ENCODE measurements at regions of chr11 and their contacts with region 1.

Region 1: DNA sequence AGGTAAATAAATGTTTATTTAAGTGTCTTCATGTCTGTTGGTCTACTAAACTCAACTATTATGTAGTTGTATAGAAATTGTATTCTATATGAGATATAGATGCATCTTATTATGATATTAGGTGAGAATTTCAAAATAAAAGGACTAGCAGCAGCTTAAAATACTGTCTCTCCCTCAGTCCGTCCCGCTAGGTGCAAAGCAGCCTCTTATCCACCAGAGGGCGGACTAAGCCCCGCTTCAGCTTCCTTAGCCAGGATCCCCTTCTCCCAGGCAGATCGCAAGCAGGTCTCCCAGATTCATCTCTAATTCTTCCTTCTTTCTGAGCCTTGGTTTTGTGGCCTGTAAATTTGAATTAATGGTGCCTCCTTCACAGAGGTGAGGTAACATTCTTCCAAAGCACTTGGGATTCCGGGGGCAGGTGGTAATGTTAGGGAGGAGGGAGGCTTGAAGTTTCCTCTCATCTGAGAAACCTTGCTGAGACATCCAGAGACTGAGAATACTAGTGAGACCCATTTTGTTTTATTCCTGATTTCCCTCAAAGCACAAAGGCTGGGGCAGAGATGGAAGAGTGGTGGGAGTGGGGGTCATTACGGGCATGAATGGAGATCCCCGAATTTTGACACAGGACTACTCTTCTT is 13.5 kb upstream of the INSC start:
- DNase-seq: peak; percentile 49
- H3K4me3 ChIP-seq: no peak overlapping the region
- H3K27ac ChIP-seq: no peak overlapping the region
- H3K4me1 ChIP-seq: peaks cover 33% of the 10 kb centered on the region
- H3K27me3 ChIP-seq: no peaks in the 10 kb centered on the region
- CTCF ChIP-seq: peak; percentile 94 to 96

Region 2: DNA sequence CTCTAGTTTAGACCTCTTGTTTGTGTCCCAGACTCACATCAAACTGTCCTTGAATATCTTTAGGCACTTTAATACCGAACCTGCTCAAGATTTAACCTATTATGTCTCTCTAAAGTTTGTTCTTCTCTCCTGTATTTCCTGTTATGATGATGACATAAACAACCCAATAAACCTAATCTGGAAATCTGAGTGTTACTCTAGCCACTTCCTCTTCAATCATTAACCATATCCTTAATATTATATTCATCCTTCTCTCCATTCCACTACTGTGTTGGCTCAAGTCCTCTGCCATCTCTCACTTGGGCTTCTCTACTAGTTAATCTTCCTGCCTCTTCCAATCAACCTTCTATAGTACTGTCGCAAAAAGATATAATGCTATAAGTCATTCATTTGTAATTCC is 637.6 kb before region 1 on chr11:
- CTCF ChIA-PET with region 1: no interaction called
- dilution Hi-C with region 1: no loop called
- in situ Hi-C with region 1: no loop called
- intact Hi-C with region 1: no loop called
- DNase-seq: no peak
- H3K4me3 ChIP-seq: no peak overlapping the region
- H3K27ac ChIP-seq: no peak overlapping the region
- H3K4me1 ChIP-seq: no peaks in the 10 kb centered on the region
- H3K27me3 ChIP-seq: no peaks in the 10 kb centered on the region
- CTCF ChIP-seq: no peak

Region 3: DNA sequence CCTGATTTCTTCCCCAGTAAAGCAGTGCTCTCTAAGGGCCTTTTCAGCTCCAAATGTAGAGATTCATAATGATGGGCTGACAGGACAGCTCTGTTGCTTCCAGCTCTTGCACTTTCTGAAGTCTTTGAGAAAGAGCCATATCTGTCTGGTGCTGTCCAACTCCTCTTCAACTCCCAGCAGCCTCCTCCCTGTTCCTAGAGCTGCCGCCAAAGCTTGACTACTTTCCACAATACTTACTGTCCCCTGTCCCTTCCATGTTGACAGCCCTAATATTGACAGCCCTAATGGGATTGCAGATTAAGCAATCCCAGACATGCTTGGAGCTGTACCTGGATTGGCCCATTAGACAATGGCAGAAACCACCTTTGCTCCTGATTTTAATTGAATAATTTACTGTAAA is 43.2 kb after region 1 on chr11:
- CTCF ChIA-PET with region 1: interaction called, 8 read pairs
- dilution Hi-C with region 1: loop called (anchors 5 kb)
- in situ Hi-C with region 1: no loop called
- intact Hi-C with region 1: no loop called
- DNase-seq: no peak
- H3K4me3 ChIP-seq: no peak overlapping the region
- H3K27ac ChIP-seq: no peak overlapping the region
- H3K4me1 ChIP-seq: no peaks in the 10 kb centered on the region
- H3K27me3 ChIP-seq: no peaks in the 10 kb centered on the region
- CTCF ChIP-seq: no peak

Region 4: GRCh38 chr11:15199693-15200092 is 98.5 kb after region 1 on chr11:
- CTCF ChIA-PET with region 1: no interaction called
- dilution Hi-C with region 1: loop called (anchors 5 kb)
- in situ Hi-C with region 1: loop called in 1 of 2 experiments (anchors 10 kb)
- intact Hi-C with region 1: no loop called
- DNase-seq: peak; percentile 67
- H3K4me3 ChIP-seq: no peak overlapping the region
- H3K27ac ChIP-seq: no peak overlapping the region
- H3K4me1 ChIP-seq: no peaks in the 10 kb centered on the region
- H3K27me3 ChIP-seq: no peaks in the 10 kb centered on the region
- CTCF ChIP-seq: no peak

Region 5: GRCh38 chr11:15213471-15214231 is 112.5 kb after region 1 on chr11:
- CTCF ChIA-PET with region 1: no interaction called
- dilution Hi-C with region 1: no loop called
- in situ Hi-C with region 1: loop called (anchors 5 to 10 kb)
- intact Hi-C with region 1: loop called (anchors 1 kb)
- DNase-seq: no peak
- H3K4me3 ChIP-seq: no peak overlapping the region
- H3K27ac ChIP-seq: no peak overlapping the region
- H3K4me1 ChIP-seq: no peaks in the 10 kb centered on the region
- H3K27me3 ChIP-seq: no peaks in the 10 kb centered on the region
- CTCF ChIP-seq: no peak

Measured in mammary epithelial cell (primary cell).